ENCODE measurements at regions of chr19 and their contacts with region 1.

Region 1: GRCh38 chr19:13212759-13213330 is 62.6 kb downstream of the IER2 start:
- DNase-seq: peak; percentile 72 to 78 (median 76)
- ATAC-seq: peak; percentile 68
- H3K4me3 ChIP-seq: no peak overlapping the region
- H3K4me1 ChIP-seq: no peaks in the 10 kb centered on the region
- CTCF ChIP-seq: peak; percentile 41

Region 2: GRCh38 chr19:13160557-13160956 is 52.3 kb before region 1 on chr19:
- intact Hi-C with region 1: no loop called
- DNase-seq: no peak
- ATAC-seq: no peak
- H3K4me3 ChIP-seq: no peak overlapping the region
- H3K4me1 ChIP-seq: peaks cover 36% of the 10 kb centered on the region
- CTCF ChIP-seq: no peak

Region 3: GRCh38 chr19:13172068-13172896 is 40.6 kb before region 1 on chr19:
- intact Hi-C with region 1: no loop called
- DNase-seq: peak; percentile 83 to 90 (median 84)
- ATAC-seq: peak; percentile 15
- H3K4me3 ChIP-seq: no peak overlapping the region
- H3K4me1 ChIP-seq: peaks cover 33% of the 10 kb centered on the region
- CTCF ChIP-seq: no peak

Region 4: GRCh38 chr19:13588957-13589833 is 376.4 kb after region 1 on chr19:
- intact Hi-C with region 1: loop called in 1 of 2 experiments (anchors 5 kb)
- DNase-seq: peak; percentile 63 to 82 (median 79)
- ATAC-seq: peak; percentile 90
- H3K4me3 ChIP-seq: no peak overlapping the region
- H3K4me1 ChIP-seq: no peaks in the 10 kb centered on the region
- CTCF ChIP-seq: peak; percentile 97

Measured in mucosa of descending colon (tissue), 3 donors.